ENCODE measurements at regions of chr10 and their contacts with region 1.

Region 1: DNA sequence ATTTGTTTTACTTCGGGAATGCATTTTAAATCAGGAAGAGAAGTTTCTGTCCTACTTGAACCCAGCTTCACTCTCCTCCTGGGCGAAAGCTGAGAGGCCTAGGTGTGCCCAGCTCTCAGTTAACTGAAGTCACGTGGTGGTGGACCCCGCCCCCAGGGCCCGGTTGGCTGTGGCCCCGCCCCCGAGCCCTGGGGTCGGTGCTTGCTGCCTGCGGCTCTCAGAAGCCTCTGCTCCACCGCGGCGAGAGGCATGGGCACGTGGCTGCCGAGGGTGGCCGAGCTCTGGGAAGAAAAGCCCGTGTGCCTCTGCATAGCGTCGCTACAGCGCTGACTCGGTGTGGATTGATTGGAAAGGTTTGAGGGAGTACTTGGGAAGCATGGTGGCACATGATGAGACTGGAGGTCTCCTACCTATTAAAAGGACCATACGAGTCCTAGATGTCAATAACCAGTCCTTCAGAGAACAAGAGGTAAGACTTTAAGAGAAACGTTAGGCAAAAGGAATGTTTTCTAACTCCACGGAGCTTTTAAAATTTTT is 34.1 kb downstream of the NET1 start:
- DNase-seq: peak; percentile 77 to 88 (median 86)
- ATAC-seq: peak; percentile 93
- H3K4me3 ChIP-seq: peak overlapping the region; percentile 79
- H3K4me3 Mint-ChIP-seq: peak overlapping the region; percentile 92 to 100 (median 96)
- H3K27ac ChIP-seq: peak overlapping the region; percentile 78
- H3K27ac Mint-ChIP-seq: peak overlapping the region; percentile 82 to 97 (median 92)
- H3K4me1 ChIP-seq: peaks cover 0 to 24% of the 10 kb centered on the region in 2 donors
- H3K4me1 Mint-ChIP-seq: peaks cover 16 to 78% (median 62%) of the 10 kb centered on the region in 7 donors
- H3K27me3 ChIP-seq: no peaks in the 10 kb centered on the region
- H3K27me3 Mint-ChIP-seq: no peaks in the 10 kb centered on the region

Region 2: GRCh38 chr10:5457741-5458140 is 11.3 kb after region 1 on chr10:
- CTCF ChIA-PET with region 1: interaction called, 5 read pairs
- POLR2A ChIA-PET with region 1: interaction called, 11 read pairs
- intact Hi-C with region 1: loop called in 1 of 2 experiments (anchors 1 kb)
- DNase-seq: peak in 7 of 9 donors; percentile 45 to 81 (median 72)
- ATAC-seq: peak; percentile 87
- H3K4me3 ChIP-seq: no peak overlapping the region
- H3K4me3 Mint-ChIP-seq: peak overlapping the region; percentile 9 to 82 (median 57)
- H3K27ac ChIP-seq: no peak overlapping the region
- H3K27ac Mint-ChIP-seq: peak overlapping the region; percentile 67 to 86 (median 81)
- H3K4me1 ChIP-seq: peaks cover 0 to 10% of the 10 kb centered on the region in 2 donors
- H3K4me1 Mint-ChIP-seq: peaks cover 8 to 26% (median 18%) of the 10 kb centered on the region in 7 donors
- H3K27me3 ChIP-seq: no peaks in the 10 kb centered on the region
- H3K27me3 Mint-ChIP-seq: no peaks in the 10 kb centered on the region

Region 3: DNA sequence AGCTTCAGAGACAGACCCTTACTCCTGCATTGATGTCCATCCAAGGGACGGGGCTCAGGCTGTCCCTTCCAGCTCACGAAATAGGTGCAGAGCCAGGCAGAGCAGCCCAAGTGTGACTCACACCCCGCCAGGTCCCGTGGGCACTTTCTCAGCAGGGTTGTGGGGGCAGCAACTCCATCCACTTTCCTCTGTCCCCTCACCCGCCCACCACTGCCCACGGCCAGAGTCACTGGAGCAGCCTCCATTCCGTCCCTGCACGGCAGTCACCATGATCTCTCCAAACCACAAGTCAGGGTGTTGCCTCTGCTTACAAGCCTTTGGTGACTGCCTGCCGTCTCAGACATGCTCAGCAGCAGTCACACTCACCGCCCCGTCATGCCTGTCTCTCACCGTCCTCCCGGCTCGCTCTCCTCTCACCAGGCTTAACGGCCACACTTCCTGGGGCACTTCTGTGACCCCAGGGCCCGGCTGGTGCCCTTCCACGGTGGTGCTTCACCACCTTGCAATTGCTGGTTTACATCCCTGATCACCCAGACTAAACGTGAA is 117.6 kb after region 1 on chr10:
- CTCF ChIA-PET with region 1: interaction called, 3 read pairs
- POLR2A ChIA-PET with region 1: interaction called, 70 read pairs
- intact Hi-C with region 1: loop called in 1 of 2 experiments (anchors 1 kb)
- DNase-seq: peak; percentile 34 to 67 (median 64)
- ATAC-seq: peak; percentile 87
- H3K4me3 ChIP-seq: peak overlapping the region; percentile 34
- H3K4me3 Mint-ChIP-seq: peak overlapping the region; percentile 78 to 95 (median 86)
- H3K27ac ChIP-seq: peak overlapping the region; percentile 83
- H3K27ac Mint-ChIP-seq: peak overlapping the region; percentile 97 to 100 (median 99)
- H3K4me1 ChIP-seq: peaks cover 3 to 31% of the 10 kb centered on the region in 2 donors
- H3K4me1 Mint-ChIP-seq: peaks cover 21 to 56% (median 43%) of the 10 kb centered on the region in 7 donors
- H3K27me3 ChIP-seq: no peaks in the 10 kb centered on the region
- H3K27me3 Mint-ChIP-seq: peaks cover 0 to 6% (median 0%) of the 10 kb centered on the region in 5 donors

Region 4: DNA sequence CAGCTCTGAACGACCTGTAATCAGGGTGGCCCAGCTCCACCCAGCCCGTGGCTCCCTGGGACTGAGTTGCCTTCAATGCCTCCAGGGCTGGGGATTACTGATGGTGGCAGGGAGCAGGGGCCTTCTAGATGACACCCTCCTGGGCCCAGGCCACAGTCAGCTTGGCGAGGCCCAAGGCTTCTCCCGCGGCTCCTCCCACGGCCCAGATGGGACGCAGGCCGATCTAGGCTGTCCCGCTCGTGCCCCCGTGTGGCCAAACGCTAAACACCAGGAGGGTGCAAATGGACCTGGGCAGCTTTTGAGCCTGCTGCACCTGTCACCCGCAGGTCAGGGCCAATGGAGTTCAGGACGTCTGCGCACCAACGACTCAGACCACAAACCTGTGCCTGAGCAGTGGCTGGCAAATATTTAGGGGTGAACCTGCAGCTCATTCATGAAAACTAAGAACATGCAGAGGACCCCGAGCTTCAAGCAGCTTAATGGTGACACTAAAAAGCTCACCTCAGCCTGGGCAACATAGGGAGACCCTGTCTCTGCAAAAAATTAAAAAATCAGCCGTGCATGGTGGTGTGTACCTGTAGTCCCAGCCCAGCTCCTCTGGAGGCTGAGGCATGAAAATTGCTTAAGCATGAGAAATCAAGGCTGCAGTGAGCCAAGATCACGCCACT is 176.8 kb after region 1 on chr10:
- CTCF ChIA-PET with region 1: interaction called, 340 read pairs
- POLR2A ChIA-PET with region 1: interaction called, 78 read pairs
- intact Hi-C with region 1: loop called (anchors 1 kb)
- DNase-seq: peak; percentile 62 to 82 (median 70)
- ATAC-seq: peak; percentile 96
- H3K4me3 ChIP-seq: no peak overlapping the region
- H3K4me3 Mint-ChIP-seq: peak overlapping the region in 1 of 10 donors; percentile 32
- H3K27ac ChIP-seq: no peak overlapping the region
- H3K27ac Mint-ChIP-seq: peak overlapping the region in 1 of 9 donors; percentile 41
- H3K4me1 ChIP-seq: no peaks in the 10 kb centered on the region
- H3K4me1 Mint-ChIP-seq: peaks cover 0 to 4% (median 0%) of the 10 kb centered on the region in 7 donors
- H3K27me3 ChIP-seq: no peaks in the 10 kb centered on the region
- H3K27me3 Mint-ChIP-seq: peaks cover 0 to 4% (median 0%) of the 10 kb centered on the region in 5 donors

Region 5: DNA sequence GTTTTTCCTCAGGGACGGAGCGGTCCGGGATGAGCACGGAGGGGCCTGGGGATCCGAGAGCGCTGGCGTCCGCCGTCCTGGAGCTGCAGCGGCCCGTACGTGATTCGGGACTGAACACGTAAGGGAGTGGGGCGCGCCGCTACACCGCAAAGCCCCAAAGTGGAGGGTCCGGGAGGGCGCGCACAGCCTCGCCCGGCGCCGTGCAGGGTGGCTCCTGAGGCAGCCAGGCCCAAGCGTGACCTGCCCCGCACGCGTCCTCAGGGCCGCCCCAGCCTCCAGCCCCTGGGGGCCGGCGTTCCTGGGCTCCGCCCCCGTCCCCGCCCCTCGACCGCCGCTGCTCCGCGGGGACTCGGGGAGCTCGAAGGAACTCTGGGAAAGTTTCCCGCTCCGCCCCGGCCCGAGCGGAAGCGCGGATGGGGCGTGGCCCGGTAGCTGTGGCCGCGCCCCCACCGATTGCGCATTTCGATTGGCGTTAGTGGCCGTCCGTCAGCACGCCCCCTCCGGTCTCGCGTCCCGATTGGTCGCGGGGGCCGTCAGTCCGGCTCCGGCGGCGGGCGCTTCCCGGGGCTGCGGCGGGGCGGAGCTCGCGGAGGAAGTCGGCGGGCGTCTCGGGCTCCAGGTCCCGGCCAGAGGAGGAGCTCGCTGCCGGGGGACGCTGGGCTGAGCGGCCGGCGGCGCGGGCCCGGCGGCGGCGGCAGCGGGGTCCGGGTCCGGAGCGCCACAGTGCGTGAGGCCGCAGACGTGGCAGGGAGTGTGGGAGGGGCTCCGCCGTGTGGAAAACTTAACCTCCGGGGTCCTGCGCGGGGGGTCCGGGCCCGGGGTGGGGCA is 443.4 kb after region 1 on chr10 and contains the starts of genes ANKRD16 and FBH1:
- CTCF ChIA-PET with region 1: interaction called, 3 read pairs
- POLR2A ChIA-PET with region 1: no interaction called
- intact Hi-C with region 1: loop called in 1 of 2 experiments (anchors 5 kb)
- DNase-seq: peak; percentile 94 to 100 (median 96)
- ATAC-seq: peak; percentile 96
- H3K4me3 ChIP-seq: peak within 1 kb of the TSS; percentile 70
- H3K4me3 Mint-ChIP-seq: peak within 1 kb of the TSS; percentile 90 to 97 (median 94)
- H3K27ac ChIP-seq: peak within 1 kb of the TSS; percentile 81
- H3K27ac Mint-ChIP-seq: peak within 1 kb of the TSS; percentile 80 to 94 (median 87)
- H3K4me1 ChIP-seq: peaks cover 12% of the 10 kb centered on the region in 2 donors
- H3K4me1 Mint-ChIP-seq: peaks cover 34 to 64% (median 60%) of the 10 kb centered on the region in 7 donors
- H3K27me3 ChIP-seq: no peaks in the 10 kb centered on the region
- H3K27me3 Mint-ChIP-seq: no peaks in the 10 kb centered on the region
- total RNA-seq, gene ANKRD16: 4.6 to 9.8 (median 7.2) TPM
- total RNA-seq, gene FBH1: 64.8 to 105 (median 78.6) TPM

Region 6: GRCh38 chr10:6002809-6003510 is 556.5 kb after region 1 on chr10:
- CTCF ChIA-PET with region 1: no interaction called
- POLR2A ChIA-PET with region 1: no interaction called
- intact Hi-C with region 1: no loop called
- DNase-seq: no peak
- ATAC-seq: peak; percentile 40
- H3K4me3 ChIP-seq: no peak overlapping the region
- H3K4me3 Mint-ChIP-seq: no peak overlapping the region
- H3K27ac ChIP-seq: no peak overlapping the region
- H3K27ac Mint-ChIP-seq: peak overlapping the region in 1 of 9 donors; percentile 64
- H3K4me1 ChIP-seq: peaks cover 0 to 7% of the 10 kb centered on the region in 2 donors
- H3K4me1 Mint-ChIP-seq: peaks cover 12 to 37% (median 20%) of the 10 kb centered on the region in 7 donors
- H3K27me3 ChIP-seq: no peaks in the 10 kb centered on the region
- H3K27me3 Mint-ChIP-seq: peaks cover 0 to 21% (median 6%) of the 10 kb centered on the region in 5 donors

Region 7: DNA sequence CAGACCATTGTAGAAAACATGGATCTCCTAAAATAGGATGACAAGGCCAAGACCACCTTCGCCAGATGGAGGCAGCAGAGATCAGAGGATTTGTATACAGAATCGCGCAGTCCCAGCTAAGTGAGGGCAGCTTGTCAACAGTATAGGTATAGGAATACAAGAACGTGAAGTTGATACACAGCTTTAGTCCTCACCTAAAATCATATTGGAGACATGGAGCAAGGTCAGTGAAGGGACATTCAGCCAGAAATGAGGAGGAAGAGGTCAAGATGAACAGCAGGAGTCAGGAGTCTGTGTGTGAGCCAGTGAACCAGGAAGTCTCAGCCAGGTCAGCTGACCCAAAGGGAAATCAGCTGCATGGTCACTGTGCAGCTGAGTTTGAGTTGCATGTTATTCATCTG is 1397.0 kb after region 1 on chr10:
- CTCF ChIA-PET with region 1: no interaction called
- POLR2A ChIA-PET with region 1: no interaction called
- intact Hi-C with region 1: no loop called
- DNase-seq: no peak
- ATAC-seq: peak; percentile 52
- H3K4me3 ChIP-seq: no peak overlapping the region
- H3K4me3 Mint-ChIP-seq: no peak overlapping the region
- H3K27ac ChIP-seq: no peak overlapping the region
- H3K27ac Mint-ChIP-seq: no peak overlapping the region
- H3K4me1 ChIP-seq: no peaks in the 10 kb centered on the region
- H3K4me1 Mint-ChIP-seq: peaks cover 0 to 1% (median 0%) of the 10 kb centered on the region in 7 donors
- H3K27me3 ChIP-seq: no peaks in the 10 kb centered on the region
- H3K27me3 Mint-ChIP-seq: peaks cover 7 to 23% (median 16%) of the 10 kb centered on the region in 5 donors

Measured in naive thymus-derived CD4-positive, alpha-beta T cell (primary cell).